K562 (cell line): ENCODE measurements at regions of chr18 and their contacts with region 1.

Region 1: GRCh38 chr18:3593904-3594661 is 144.1 kb downstream of the TGIF1 start:
- DNase-seq: peak; percentile 82 to 97 (median 86)
- ATAC-seq: peak; percentile 61
- H3K4me3 ChIP-seq: peak overlapping the region; percentile 42
- H3K27ac ChIP-seq: peak overlapping the region; percentile 94
- H3K4me1 ChIP-seq: peaks cover 44 to 60% of the 10 kb centered on the region in 2 experiments
- H3K27me3 ChIP-seq: no peaks in the 10 kb centered on the region
- CTCF ChIP-seq: peak; percentile 87 to 94 (median 90)
- EP300 ChIP-seq: peak; percentile 70
- POLR2A ChIP-seq: no peak
- RAD21 ChIP-seq: peak; percentile 48 to 66

Region 2: GRCh38 chr18:3297025-3297984 is 296.8 kb before region 1 on chr18:
- CTCF ChIA-PET with region 1: no interaction called
- POLR2A ChIA-PET with region 1: interaction called, 14 read pairs
- in situ Hi-C with region 1: no loop called
- intact Hi-C with region 1: no loop called
- DNase-seq: peak; percentile 71 to 93 (median 74)
- ATAC-seq: peak; percentile 95
- H3K4me3 ChIP-seq: peak overlapping the region; percentile 57
- H3K27ac ChIP-seq: peak overlapping the region; percentile 54
- H3K4me1 ChIP-seq: peaks cover 8 to 21% of the 10 kb centered on the region in 2 experiments; a peak in 4 of 5 replicates
- H3K27me3 ChIP-seq: no peaks in the 10 kb centered on the region
- CTCF ChIP-seq: peak; percentile 83 to 97 (median 87)
- EP300 ChIP-seq: peak; percentile 50
- POLR2A ChIP-seq: peak; percentile 88
- RAD21 ChIP-seq: peak in 1 of 2 experiments; percentile 25; a peak in 2 of 4 replicates

Region 3: DNA sequence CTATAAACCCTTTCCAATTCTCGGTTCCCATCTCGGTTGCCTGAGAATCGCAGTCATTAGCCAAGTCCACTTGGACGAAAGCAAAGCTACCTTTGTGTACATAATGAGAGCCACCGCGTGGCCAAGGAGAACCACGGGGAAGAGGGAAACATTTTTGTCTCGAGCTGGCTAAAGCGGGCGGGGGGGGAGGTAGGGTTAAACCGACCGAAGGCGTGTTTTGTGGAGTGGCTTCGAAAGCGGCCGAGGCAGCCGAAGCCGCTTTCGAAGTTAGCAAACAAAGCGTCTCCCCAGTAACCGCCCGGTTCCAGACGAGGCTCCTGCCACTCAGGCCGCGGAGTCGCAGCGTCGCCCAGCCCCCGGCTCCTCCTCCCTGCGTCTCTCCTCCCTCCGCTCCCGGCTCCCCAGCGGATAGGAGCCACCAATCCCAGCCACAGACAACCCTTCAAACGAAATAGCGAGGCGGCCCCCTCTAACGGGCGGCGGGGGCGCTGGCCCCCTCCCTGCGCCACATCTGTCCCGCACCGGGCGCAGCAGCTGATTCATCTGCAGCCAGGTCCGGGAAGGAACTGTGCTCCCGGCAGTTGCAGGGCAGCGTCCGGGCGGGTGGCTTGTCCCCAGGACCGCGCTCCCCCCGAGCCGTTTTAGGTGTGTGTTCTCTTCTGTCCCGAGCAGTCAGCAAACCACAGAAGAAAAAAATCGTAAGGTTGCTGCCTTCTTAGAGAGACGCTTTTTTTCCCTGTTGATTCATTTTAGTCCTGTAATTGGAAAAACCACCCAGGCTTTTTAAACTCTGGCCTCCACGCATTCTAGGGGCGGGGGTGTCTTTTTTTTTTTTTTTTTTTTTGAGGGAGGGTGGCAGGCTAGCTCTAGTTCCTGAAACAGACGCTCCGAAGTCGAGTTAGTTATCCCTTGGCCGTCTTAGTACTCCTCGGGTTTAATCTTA is 145.9 kb before region 1 on chr18:
- CTCF ChIA-PET with region 1: interaction called, 7 read pairs
- POLR2A ChIA-PET with region 1: interaction called, 44 read pairs
- in situ Hi-C with region 1: loop called (anchors 5 kb)
- intact Hi-C with region 1: loop called (anchors 2 kb)
- DNase-seq: peak; percentile 85 to 99 (median 89)
- ATAC-seq: peak; percentile 78
- H3K4me3 ChIP-seq: peak overlapping the region; percentile 87
- H3K27ac ChIP-seq: peak overlapping the region; percentile 98
- H3K4me1 ChIP-seq: peaks cover 31 to 51% of the 10 kb centered on the region in 2 experiments
- H3K27me3 ChIP-seq: no peaks in the 10 kb centered on the region
- CTCF ChIP-seq: peak in 2 of 3 experiments; percentile 31 to 49; a peak in 2 of 6 replicates
- EP300 ChIP-seq: peak; percentile 81
- POLR2A ChIP-seq: no peak
- RAD21 ChIP-seq: peak in 1 of 2 experiments; percentile 33; a peak in 3 of 4 replicates

Region 4: GRCh38 chr18:3652380-3653262 is 58.5 kb after region 1 on chr18:
- CTCF ChIA-PET with region 1: no interaction called
- POLR2A ChIA-PET with region 1: interaction called, 22 read pairs
- in situ Hi-C with region 1: no loop called
- intact Hi-C with region 1: loop called (anchors 2 kb)
- DNase-seq: peak; percentile 97 to 100 (median 98)
- ATAC-seq: peak; percentile 86
- H3K4me3 ChIP-seq: peak overlapping the region; percentile 43
- H3K27ac ChIP-seq: peak overlapping the region; percentile 83
- H3K4me1 ChIP-seq: peaks cover 57 to 64% of the 10 kb centered on the region in 2 experiments
- H3K27me3 ChIP-seq: no peaks in the 10 kb centered on the region; a peak in 1 of 5 replicates
- CTCF ChIP-seq: peak in 2 of 3 experiments; percentile 9 to 43; a peak in 3 of 6 replicates
- EP300 ChIP-seq: peak; percentile 99
- POLR2A ChIP-seq: no peak
- RAD21 ChIP-seq: peak in 1 of 2 experiments; percentile 29; a peak in 3 of 4 replicates

Region 5: DNA sequence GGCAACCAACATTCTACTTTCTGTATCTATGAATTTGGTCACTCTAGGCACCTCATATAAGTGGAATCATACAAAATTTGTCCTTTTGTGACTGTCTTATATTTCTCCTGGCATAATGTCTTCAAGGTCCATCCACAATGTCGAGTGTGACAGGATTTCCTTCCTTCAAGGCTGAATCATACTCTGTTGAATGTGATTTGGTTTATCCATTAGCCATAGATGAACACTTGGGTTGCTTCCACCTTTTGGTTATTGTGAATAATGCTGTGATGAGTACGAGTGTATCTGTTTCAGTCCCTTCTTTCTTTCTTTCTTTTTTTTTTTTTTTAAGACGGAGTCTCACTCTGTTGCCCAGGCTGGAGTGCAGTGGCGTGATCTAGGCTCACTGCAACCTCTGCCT is 167.2 kb after region 1 on chr18:
- CTCF ChIA-PET with region 1: no interaction called
- POLR2A ChIA-PET with region 1: no interaction called
- in situ Hi-C with region 1: no loop called
- intact Hi-C with region 1: no loop called
- DNase-seq: no peak
- ATAC-seq: no peak
- H3K4me3 ChIP-seq: no peak overlapping the region
- H3K27ac ChIP-seq: no peak overlapping the region
- H3K4me1 ChIP-seq: no peaks in the 10 kb centered on the region
- H3K27me3 ChIP-seq: peaks cover 17 to 18% of the 10 kb centered on the region in 2 experiments; a peak in 3 of 5 replicates
- CTCF ChIP-seq: no peak
- EP300 ChIP-seq: no peak
- POLR2A ChIP-seq: no peak
- RAD21 ChIP-seq: no peak